Sigmoid colon (tissue), 7 donors: ENCODE measurements at regions of chr5 and their contacts with region 1.

Region 1: DNA sequence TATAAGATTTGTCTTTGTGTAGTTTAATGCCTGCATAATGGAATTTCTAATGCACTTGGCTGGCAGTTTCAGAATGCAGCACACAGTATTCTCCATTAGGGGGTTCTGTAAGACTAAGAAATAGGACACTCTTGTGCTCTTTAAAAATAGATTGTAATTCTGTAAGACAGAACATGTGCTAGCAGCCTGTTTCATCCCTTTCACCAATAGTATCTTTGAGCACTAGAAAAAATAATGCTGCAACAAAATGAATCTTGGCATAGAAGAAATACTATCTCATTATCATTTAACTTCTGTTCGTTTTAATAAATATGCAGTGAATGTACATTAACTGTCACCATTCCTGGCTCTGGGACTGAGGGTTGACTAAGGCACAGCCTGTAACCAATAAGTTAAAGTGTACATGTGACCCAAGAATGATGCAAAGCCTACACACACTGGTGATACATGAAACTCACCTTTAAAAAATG is 23.8 kb upstream of the ZNF622 start:
- DNase-seq: no peak
- H3K4me3 ChIP-seq: no peak overlapping the region
- H3K27ac ChIP-seq: no peak overlapping the region
- H3K4me1 ChIP-seq: peaks cover 0 to 12% (median 8%) of the 10 kb centered on the region in 4 donors
- H3K27me3 ChIP-seq: no peaks in the 10 kb centered on the region
- CTCF ChIP-seq: peak; percentile 45 to 62 (median 52)
- EP300 ChIP-seq: no peak
- POLR2A ChIP-seq: no peak

Region 2: GRCh38 chr5:15948190-15948589 is 541.2 kb before region 1 on chr5:
- intact Hi-C with region 1: no loop called
- DNase-seq: no peak
- H3K4me3 ChIP-seq: no peak overlapping the region
- H3K27ac ChIP-seq: no peak overlapping the region
- H3K4me1 ChIP-seq: no peaks in the 10 kb centered on the region
- H3K27me3 ChIP-seq: no peaks in the 10 kb centered on the region
- CTCF ChIP-seq: no peak
- EP300 ChIP-seq: no peak
- POLR2A ChIP-seq: no peak

Region 3: GRCh38 chr5:16552666-16553343 is 63.4 kb after region 1 on chr5:
- intact Hi-C with region 1: loop called (anchors 5 kb)
- DNase-seq: peak; percentile 77
- H3K4me3 ChIP-seq: no peak overlapping the region
- H3K27ac ChIP-seq: no peak overlapping the region
- H3K4me1 ChIP-seq: peaks cover 0 to 11% (median 10%) of the 10 kb centered on the region in 4 donors
- H3K27me3 ChIP-seq: no peaks in the 10 kb centered on the region
- CTCF ChIP-seq: peak in 3 of 4 experiments; percentile 54 to 67 (median 65)
- EP300 ChIP-seq: no peak
- POLR2A ChIP-seq: no peak

Region 4: DNA sequence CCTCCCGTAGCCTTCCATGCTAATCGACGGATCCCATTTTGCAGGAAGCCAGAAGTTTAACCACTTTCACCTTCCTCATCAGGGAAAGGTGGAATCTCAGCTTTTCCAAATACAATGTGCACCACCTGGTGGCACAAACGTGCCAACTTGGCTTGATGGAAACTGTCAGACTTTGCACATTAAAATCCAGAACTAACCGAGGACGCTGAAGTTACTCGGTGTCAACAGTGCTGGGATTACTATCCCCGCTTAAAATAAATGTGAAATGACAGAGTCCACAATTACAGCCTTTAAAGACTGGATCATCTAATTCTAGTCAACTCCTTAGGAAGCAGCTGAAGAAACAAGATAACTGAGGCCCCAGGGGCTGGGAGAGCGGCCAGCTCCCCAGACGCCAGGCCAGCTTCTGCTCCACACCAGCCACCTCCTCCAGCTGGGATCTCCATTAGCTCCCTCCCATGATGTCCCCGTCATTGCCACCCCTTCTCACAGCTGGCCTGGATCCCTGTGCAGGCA is 177.6 kb after region 1 on chr5:
- intact Hi-C with region 1: loop called (anchors 2 kb)
- DNase-seq: no peak
- H3K4me3 ChIP-seq: no peak overlapping the region
- H3K27ac ChIP-seq: no peak overlapping the region
- H3K4me1 ChIP-seq: peaks cover 0 to 10% (median 4%) of the 10 kb centered on the region in 4 donors
- H3K27me3 ChIP-seq: no peaks in the 10 kb centered on the region
- CTCF ChIP-seq: peak in 3 of 4 experiments; percentile 24 to 35 (median 24)
- EP300 ChIP-seq: no peak
- POLR2A ChIP-seq: no peak

Region 5: GRCh38 chr5:17204133-17204489 is 714.8 kb after region 1 on chr5:
- intact Hi-C with region 1: loop called (anchors 5 kb)
- DNase-seq: peak; percentile 41
- H3K4me3 ChIP-seq: no peak overlapping the region
- H3K27ac ChIP-seq: no peak overlapping the region
- H3K4me1 ChIP-seq: no peaks in the 10 kb centered on the region
- H3K27me3 ChIP-seq: peaks cover 0 to 29% (median 0%) of the 10 kb centered on the region in 3 donors
- CTCF ChIP-seq: no peak
- EP300 ChIP-seq: no peak
- POLR2A ChIP-seq: no peak